WTC11 (cell line): ENCODE measurements at regions of chr6 and their contacts with region 1.

Region 1: GRCh38 chr6:137944793-137945498 is 77.9 kb downstream of the TNFAIP3 start:
- DNase-seq: no peak
- ATAC-seq: peak; percentile 84
- H3K4me3 Mint-ChIP-seq: no peak overlapping the region
- H3K27ac Mint-ChIP-seq: no peak overlapping the region
- H3K4me1 Mint-ChIP-seq: peaks cover 2% of the 10 kb centered on the region
- H3K27me3 Mint-ChIP-seq: no peaks in the 10 kb centered on the region; the same call in 1 of the 2 replicates
- CTCF ChIP-seq: peak; percentile 49

Region 2: GRCh38 chr6:137697267-137697938 is 247.5 kb before region 1 on chr6:
- CTCF ChIA-PET with region 1: interaction called, 17 read pairs
- POLR2A ChIA-PET with region 1: no interaction called
- DNase-seq: peak; percentile 19
- ATAC-seq: peak; percentile 85
- H3K4me3 Mint-ChIP-seq: no peak overlapping the region
- H3K27ac Mint-ChIP-seq: peak overlapping the region; percentile 52; the same call in 1 of the 2 replicates
- H3K4me1 Mint-ChIP-seq: peaks cover 12% of the 10 kb centered on the region
- H3K27me3 Mint-ChIP-seq: no peaks in the 10 kb centered on the region
- CTCF ChIP-seq: no peak

Region 3: DNA sequence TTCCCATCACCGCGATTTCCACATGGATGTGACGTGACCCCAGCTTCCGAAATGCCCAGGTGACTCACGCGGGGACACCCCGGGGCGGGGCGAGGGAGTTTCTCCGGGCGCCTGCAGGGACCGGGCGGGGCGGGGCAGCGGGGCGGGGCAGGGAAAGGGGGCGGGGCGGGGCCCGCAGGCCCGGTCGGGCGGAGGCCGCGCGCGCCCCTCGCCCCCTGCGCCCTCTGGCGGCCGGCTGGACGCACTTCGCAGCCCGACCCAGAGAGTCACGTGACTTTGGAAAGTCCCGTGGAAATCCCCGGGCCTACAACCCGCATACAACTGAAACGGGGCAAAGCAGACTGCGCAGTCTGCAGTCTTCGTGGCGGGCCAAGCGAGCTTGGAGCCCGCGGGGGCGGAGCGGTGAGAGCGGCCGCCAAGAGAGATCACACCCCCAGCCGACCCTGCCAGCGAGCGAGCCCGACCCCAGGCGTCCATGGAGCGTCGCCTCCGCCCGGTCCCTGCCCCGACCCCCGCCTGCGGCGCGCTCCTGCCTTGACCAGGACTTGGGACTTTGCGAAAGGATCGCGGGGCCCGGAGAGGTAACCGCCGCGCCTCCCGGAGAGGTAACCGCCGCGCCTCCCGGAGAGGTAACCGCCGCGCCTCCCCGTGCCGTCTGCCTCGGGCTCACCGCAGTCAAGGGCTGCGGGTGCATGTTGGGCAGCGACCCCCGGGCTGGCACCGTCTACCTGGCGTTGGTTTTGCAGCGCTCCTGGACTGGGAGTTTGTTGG is 77.8 kb before region 1 on chr6 and contains the start of gene TNFAIP3:
- CTCF ChIA-PET with region 1: interaction called, 14 read pairs
- POLR2A ChIA-PET with region 1: no interaction called
- DNase-seq: peak; percentile 77
- ATAC-seq: peak; percentile 72
- H3K4me3 Mint-ChIP-seq: peak within 1 kb of the TSS; percentile 87
- H3K27ac Mint-ChIP-seq: 0 out of 2 replicates have a peak within 1 kb of the TSS, but pooled peaks have one; percentile 58
- H3K4me1 Mint-ChIP-seq: peaks cover 44% of the 10 kb centered on the region
- H3K27me3 Mint-ChIP-seq: peaks cover 31% of the 10 kb centered on the region
- CTCF ChIP-seq: peak; percentile 85
- total RNA-seq, gene TNFAIP3: 3.0 to 4.7 TPM (median 4.2 TPM) in 3 replicates

Region 4: DNA sequence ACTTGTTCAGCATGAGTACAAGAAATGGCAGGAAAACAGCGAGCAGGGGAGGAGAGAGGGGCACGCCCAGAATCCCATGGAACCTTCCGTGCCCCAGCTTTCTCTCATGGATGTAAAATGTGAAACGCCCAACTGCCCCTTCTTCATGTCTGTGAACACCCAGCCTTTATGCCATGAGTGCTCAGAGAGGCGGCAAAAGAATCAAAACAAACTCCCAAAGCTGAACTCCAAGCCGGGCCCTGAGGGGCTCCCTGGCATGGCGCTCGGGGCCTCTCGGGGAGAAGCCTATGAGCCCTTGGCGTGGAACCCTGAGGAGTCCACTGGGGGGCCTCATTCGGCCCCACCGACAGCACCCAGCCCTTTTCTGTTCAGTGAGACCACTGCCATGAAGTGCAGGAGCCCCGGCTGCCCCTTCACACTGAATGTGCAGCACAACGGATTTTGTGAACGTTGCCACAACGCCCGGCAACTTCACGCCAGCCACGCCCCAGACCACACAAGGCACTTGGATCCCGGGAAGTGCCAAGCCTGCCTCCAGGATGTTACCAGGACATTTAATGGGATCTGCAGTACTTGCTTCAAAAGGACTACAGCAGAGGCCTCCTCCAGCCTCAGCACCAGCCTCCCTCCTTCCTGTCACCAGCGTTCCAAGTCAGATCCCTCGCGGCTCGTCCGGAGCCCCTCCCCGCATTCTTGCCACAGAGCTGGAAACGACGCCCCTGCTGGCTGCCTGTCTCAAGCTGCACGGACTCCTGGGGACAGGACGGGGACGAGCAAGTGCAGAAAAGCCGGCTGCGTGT is 66.3 kb before region 1 on chr6:
- CTCF ChIA-PET with region 1: interaction called, 15 read pairs
- POLR2A ChIA-PET with region 1: no interaction called
- DNase-seq: peak; percentile 86
- ATAC-seq: peak; percentile 95
- H3K4me3 Mint-ChIP-seq: peak overlapping the region; percentile 41
- H3K27ac Mint-ChIP-seq: no peak overlapping the region
- H3K4me1 Mint-ChIP-seq: peaks cover 42% of the 10 kb centered on the region
- H3K27me3 Mint-ChIP-seq: no peaks in the 10 kb centered on the region
- CTCF ChIP-seq: no peak